ENCODE measurements at regions of chr15 and their contacts with region 1.

Region 1: GRCh38 chr15:99565299-99566156 is at the start of gene MEF2A:
- DNase-seq: peak; percentile 94
- H3K4me3 Mint-ChIP-seq: peak within 1 kb of the TSS; percentile 96
- H3K27ac Mint-ChIP-seq: peak within 1 kb of the TSS; percentile 97
- H3K4me1 Mint-ChIP-seq: peaks cover 16% of the 10 kb centered on the region
- H3K27me3 Mint-ChIP-seq: no peaks in the 10 kb centered on the region
- total RNA-seq, gene MEF2A: 15.9 to 19.5 TPM

Region 2: DNA sequence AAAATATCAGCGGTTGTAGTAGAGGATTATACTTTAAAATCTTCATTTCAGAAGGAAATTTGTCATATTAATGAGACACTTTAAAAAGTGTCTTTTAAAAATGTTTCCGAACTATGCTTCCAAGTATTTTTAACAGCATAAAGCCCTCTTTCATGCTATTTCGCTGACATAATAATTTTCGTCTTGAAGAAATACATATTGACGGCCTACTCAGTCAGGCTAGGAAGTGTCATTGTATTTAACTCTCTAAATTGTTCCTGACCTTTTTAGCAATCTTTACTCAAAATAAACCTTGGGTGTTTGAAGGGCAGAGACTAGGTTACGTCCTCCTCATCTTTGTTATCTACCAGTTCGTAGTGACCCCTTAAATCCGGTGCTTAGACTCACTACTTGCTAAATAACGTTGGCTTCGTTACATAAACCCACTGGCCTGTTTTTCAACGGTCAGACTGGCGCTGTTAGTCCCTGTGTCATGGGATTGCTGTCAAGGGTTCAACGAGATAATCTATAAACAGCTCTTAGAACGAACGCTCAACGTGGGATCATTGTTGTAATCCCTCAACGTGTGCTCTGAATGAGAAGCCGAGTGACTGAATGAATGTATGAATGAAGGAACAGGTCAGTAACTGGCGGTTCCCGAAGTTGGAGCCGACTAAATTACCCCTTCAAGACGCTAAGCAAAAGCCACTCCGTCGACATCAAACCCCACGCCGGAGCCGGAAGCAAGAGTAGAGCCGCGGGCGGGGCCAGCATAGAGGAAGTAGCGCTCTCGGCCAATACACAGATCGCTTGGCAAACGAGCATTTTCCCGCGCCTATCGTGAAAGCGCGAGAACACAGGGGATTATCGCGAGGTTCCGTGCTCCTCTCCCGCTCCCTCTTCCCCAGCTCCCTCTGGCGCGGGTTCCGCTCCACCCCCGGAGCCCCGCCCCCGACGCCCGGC is 314.8 kb before region 1 on chr15:
- CTCF ChIA-PET with region 1: no interaction called
- POLR2A ChIA-PET with region 1: no interaction called
- intact Hi-C with region 1: loop called (anchors 2 kb)
- DNase-seq: peak; percentile 99
- H3K4me3 Mint-ChIP-seq: peak overlapping the region; percentile 88
- H3K27ac Mint-ChIP-seq: peak overlapping the region; percentile 84
- H3K4me1 Mint-ChIP-seq: peaks cover 28% of the 10 kb centered on the region
- H3K27me3 Mint-ChIP-seq: no peaks in the 10 kb centered on the region

Region 3: DNA sequence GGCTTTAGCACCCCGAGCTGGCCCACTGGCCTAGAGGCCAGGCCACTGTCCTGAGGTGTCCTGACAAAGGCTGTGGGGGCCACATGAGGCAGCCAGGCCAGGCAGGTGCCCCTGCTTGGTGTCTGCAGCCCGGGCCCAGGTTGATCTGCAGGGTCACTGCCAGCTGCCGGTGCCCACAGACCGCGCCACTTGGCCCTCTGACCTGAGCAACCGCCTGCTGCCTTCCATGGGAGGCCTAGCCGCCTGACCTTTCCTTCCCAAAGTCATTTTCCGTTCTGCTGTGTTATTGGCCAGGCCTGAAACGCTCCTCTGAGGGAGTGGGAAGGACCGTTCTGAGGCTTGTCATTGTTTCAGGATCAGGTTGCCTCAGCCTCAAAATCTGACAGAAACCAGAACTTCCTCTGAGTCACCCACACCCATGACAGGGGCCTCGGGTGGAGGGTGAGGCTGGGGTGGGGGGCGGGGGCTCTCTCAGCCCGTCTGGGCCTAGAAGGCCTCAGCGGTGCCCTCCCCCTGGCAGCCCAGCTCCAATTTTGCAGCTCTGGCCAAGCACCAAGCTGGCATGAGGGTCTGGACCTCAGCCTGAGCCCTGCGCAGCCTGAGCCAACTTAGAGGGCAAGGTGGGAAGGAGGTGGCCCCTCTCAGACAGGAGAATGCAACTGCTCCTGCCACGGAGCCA is 140.4 kb before region 1 on chr15:
- CTCF ChIA-PET with region 1: no interaction called
- POLR2A ChIA-PET with region 1: no interaction called
- intact Hi-C with region 1: loop called (anchors 2 kb)
- DNase-seq: peak; percentile 81
- H3K4me3 Mint-ChIP-seq: peak overlapping the region; percentile 4
- H3K27ac Mint-ChIP-seq: peak overlapping the region; percentile 70
- H3K4me1 Mint-ChIP-seq: peaks cover 54% of the 10 kb centered on the region
- H3K27me3 Mint-ChIP-seq: peaks cover 4% of the 10 kb centered on the region

Region 4: GRCh38 chr15:99507504-99508310 is 57.8 kb before region 1 on chr15:
- CTCF ChIA-PET with region 1: no interaction called
- POLR2A ChIA-PET with region 1: interaction called, 3 read pairs
- intact Hi-C with region 1: loop called (anchors 5 kb)
- DNase-seq: no peak
- H3K4me3 Mint-ChIP-seq: no peak overlapping the region
- H3K27ac Mint-ChIP-seq: no peak overlapping the region
- H3K4me1 Mint-ChIP-seq: peaks cover 24% of the 10 kb centered on the region
- H3K27me3 Mint-ChIP-seq: no peaks in the 10 kb centered on the region

Region 5: GRCh38 chr15:99733268-99734039 is 167.9 kb after region 1 on chr15 and contains the start of gene LYSMD4:
- CTCF ChIA-PET with region 1: interaction called, 3 read pairs
- POLR2A ChIA-PET with region 1: interaction called, 5 read pairs
- intact Hi-C with region 1: loop called (anchors 2 kb)
- DNase-seq: peak; percentile 99
- H3K4me3 Mint-ChIP-seq: peak within 1 kb of the TSS; percentile 75
- H3K27ac Mint-ChIP-seq: peak within 1 kb of the TSS; percentile 92
- H3K4me1 Mint-ChIP-seq: peaks cover 11% of the 10 kb centered on the region
- H3K27me3 Mint-ChIP-seq: no peaks in the 10 kb centered on the region
- total RNA-seq, gene LYSMD4: 5.2 to 7.6 TPM

Measured in activated CD4-positive, alpha-beta memory T cell treated with anti-CD3 and anti-CD28 coated beads for 36 hours (primary cell).